ENCODE measurements at regions of chr13 and their contacts with region 1.

Region 1: GRCh38 chr13:61908906-61909615 is 493.4 kb upstream of the PCDH20 start:
- DNase-seq: no peak

Region 2: DNA sequence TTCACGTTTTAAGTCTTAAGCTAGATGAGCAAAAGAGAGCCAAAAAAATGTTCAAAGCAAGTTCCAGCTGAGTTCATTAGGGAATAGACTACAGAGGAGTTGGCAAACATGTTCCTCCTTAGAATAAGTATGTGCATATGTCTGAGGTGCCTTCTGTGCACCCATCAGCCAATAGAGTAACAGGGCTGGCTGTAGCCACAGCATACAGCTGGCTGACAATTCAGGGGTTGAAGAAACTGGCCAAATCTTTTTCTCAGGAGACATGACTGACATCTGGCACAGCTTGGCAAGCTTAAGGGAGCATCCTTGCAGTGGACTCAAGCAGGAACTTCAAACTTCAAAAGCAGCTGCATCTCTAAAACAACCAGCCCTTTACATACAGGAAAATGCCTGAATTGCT is 78.6 kb before region 1 on chr13:
- intact Hi-C with region 1: loop called in 1 of 2 experiments (anchors 2 kb)
- DNase-seq: no peak